ENCODE measurements at regions of chr11 and their contacts with region 1.

Region 1: DNA sequence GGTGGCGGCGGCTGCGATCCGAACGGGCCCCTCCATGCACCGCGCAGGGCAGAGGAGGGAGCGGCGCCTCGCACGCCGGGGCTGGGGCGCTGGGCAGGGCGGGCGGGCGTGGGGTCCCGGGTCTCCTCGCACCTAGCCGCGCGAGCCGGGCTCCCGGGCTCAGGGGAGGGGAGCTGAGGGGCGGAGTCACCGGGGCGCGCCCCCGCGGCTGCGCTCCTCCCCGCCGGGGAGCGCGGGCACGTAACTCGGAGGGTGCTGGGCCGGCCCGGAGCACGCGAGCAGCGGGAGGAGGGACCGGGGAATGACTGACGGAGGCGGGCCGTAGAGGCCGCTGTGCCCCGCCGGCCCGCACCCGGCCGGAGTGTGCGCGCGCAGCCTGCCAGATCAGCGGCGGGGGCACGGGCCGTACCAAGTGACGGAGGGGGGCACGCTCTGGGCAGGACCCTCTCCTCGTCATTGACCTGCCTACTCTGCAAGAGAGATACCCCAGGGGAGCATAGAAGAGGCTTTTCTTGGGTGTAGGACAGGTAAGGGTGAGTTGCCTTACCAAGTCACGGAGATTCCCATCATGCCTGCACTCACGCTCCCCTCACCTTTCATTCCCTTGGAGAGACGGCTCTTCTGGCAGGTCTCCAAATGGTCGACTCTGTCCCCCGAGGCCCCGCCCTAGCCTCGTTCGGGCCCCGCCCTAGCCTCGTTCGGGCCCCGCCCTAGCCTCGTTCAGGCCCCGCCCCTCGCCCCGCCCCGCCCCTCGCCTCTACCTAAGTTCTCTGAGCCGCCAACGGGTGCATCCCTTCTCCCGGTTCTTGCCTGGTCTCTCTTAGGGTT is at the start of gene CDON:
- DNase-seq: peak; percentile 95
- ATAC-seq: peak; percentile 97
- H3K4me3 Mint-ChIP-seq: peak within 1 kb of the TSS; percentile 74
- H3K27ac Mint-ChIP-seq: peak within 1 kb of the TSS; percentile 94
- H3K4me1 Mint-ChIP-seq: peaks cover 5% of the 10 kb centered on the region
- H3K27me3 Mint-ChIP-seq: peaks cover 12% of the 10 kb centered on the region
- total RNA-seq, gene CDON: 1.8 to 3.2 TPM

Region 2: DNA sequence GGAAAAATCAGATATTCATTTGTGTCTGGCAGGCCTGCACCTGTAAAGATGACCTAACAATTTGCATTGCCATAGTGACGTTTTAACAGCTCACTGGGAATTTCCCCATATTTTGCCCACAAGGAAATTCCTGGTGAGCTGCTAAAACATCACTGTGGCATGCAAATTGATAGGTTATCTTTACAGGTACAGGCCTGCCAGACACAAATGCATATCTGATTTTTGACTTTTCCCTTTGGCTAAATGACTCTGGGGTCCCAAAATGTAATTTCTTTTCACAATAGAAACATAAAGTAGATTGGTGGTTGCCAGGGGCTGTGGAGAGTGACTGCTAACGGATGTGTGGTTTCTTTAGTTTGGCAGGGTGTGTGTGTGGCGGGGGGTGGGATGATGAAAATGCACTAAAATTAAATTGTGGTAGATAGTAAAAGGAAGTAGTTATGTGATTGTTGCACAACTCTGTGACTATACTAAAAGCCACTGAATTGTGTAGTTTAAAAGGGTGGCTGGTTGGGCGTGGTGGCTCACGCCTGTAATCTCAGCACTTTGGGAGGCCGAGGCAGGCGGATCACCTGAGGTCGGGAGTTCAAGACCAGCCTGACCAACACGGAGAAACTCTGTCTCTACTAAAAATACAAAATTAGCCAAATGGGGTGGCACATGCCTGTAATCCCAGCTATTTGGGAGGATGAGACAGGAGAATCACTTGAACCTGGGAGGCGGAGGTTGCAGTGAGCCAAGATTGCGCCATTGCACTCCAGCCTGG is 548.4 kb before region 1 on chr11:
- CTCF ChIA-PET with region 1: no interaction called
- POLR2A ChIA-PET with region 1: no interaction called
- intact Hi-C with region 1: loop called in 1 of 2 experiments (anchors 10 kb)
- DNase-seq: peak; percentile 78
- ATAC-seq: peak; percentile 86
- H3K4me3 Mint-ChIP-seq: peak overlapping the region; percentile 7
- H3K27ac Mint-ChIP-seq: peak overlapping the region; percentile 85
- H3K4me1 Mint-ChIP-seq: peaks cover 39% of the 10 kb centered on the region
- H3K27me3 Mint-ChIP-seq: no peaks in the 10 kb centered on the region

Region 3: DNA sequence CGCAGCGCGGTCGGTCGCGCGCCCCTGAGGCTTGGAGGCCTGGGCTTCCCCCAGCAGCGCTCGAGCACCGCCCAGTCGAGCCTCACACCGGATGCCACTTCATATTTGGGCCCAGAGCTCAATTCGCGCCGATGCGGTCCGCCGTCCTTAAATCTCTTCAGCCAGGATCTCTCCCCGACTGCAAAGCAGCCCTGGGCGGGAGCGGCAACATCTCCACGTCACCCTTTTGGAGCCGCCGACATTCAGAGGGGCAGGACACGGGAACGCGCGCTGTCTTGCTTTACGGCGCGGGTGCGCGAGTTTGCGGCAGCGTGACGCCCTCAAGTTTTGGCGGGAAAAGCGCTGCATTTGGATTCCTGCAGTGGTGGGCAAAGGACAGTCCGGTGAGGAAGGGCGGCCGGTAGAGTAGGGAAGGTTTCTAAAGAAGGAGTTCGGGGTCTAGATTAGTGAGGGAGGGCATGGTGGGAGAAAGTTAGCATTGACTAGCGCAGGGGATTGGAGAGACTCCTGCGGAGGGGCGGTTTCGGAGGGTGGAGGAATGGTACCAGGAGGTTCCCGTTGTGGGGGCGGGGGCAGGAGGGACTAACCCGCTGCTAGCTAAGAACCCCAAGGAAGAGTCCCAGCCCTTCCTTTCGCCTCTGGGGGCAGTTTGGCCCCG is 437.1 kb before region 1 on chr11:
- CTCF ChIA-PET with region 1: no interaction called
- POLR2A ChIA-PET with region 1: no interaction called
- intact Hi-C with region 1: loop called in 1 of 2 experiments (anchors 1 kb)
- DNase-seq: peak; percentile 92
- ATAC-seq: peak; percentile 88
- H3K4me3 Mint-ChIP-seq: peak overlapping the region; percentile 88
- H3K27ac Mint-ChIP-seq: peak overlapping the region; percentile 98
- H3K4me1 Mint-ChIP-seq: peaks cover 17% of the 10 kb centered on the region
- H3K27me3 Mint-ChIP-seq: no peaks in the 10 kb centered on the region

Region 4: GRCh38 chr11:126080161-126080941 is 17.5 kb after region 1 on chr11:
- CTCF ChIA-PET with region 1: interaction called, 5 read pairs
- POLR2A ChIA-PET with region 1: interaction called, 5 read pairs
- intact Hi-C with region 1: loop called in 1 of 2 experiments (anchors 1 kb)
- DNase-seq: no peak
- ATAC-seq: no peak
- H3K4me3 Mint-ChIP-seq: no peak overlapping the region
- H3K27ac Mint-ChIP-seq: no peak overlapping the region
- H3K4me1 Mint-ChIP-seq: peaks cover 24% of the 10 kb centered on the region
- H3K27me3 Mint-ChIP-seq: no peaks in the 10 kb centered on the region

Region 5: GRCh38 chr11:126146433-126147192 is 83.7 kb after region 1 on chr11:
- CTCF ChIA-PET with region 1: no interaction called
- POLR2A ChIA-PET with region 1: no interaction called
- intact Hi-C with region 1: no loop called
- DNase-seq: no peak
- ATAC-seq: no peak
- H3K4me3 Mint-ChIP-seq: no peak overlapping the region
- H3K27ac Mint-ChIP-seq: no peak overlapping the region
- H3K4me1 Mint-ChIP-seq: no peaks in the 10 kb centered on the region
- H3K27me3 Mint-ChIP-seq: no peaks in the 10 kb centered on the region

Region 6: GRCh38 chr11:126282736-126283591 is 220.1 kb after region 1 on chr11 and contains the start of gene TIRAP:
- CTCF ChIA-PET with region 1: no interaction called
- POLR2A ChIA-PET with region 1: no interaction called
- intact Hi-C with region 1: loop called in 1 of 2 experiments (anchors 5 kb)
- DNase-seq: peak; percentile 76
- ATAC-seq: peak; percentile 53
- H3K4me3 Mint-ChIP-seq: peak within 1 kb of the TSS; percentile 81
- H3K27ac Mint-ChIP-seq: peak within 1 kb of the TSS; percentile 94
- H3K4me1 Mint-ChIP-seq: peaks cover 46% of the 10 kb centered on the region
- H3K27me3 Mint-ChIP-seq: no peaks in the 10 kb centered on the region
- total RNA-seq, gene TIRAP: 5.3 to 7.5 TPM